Esophagus muscularis mucosa (tissue), 4 donors: ENCODE measurements at regions of chr12 and their contacts with region 1.

Region 1: GRCh38 chr12:132083941-132084620 is 60.0 kb downstream of the DDX51 start:
- DNase-seq: peak; percentile 97
- H3K4me3 ChIP-seq: peak overlapping the region; percentile 95 to 99 (median 98)
- H3K27ac ChIP-seq: peak overlapping the region; percentile 88 to 95 (median 93)
- H3K4me1 ChIP-seq: peaks cover 13 to 23% (median 22%) of the 10 kb centered on the region in 4 donors
- H3K27me3 ChIP-seq: no peaks in the 10 kb centered on the region
- CTCF ChIP-seq: no peak
- EP300 ChIP-seq: no peak
- POLR2A ChIP-seq: peak; percentile 81

Region 2: GRCh38 chr12:131896080-131896810 is 187.8 kb before region 1 on chr12:
- intact Hi-C with region 1: no loop called
- DNase-seq: peak; percentile 96
- H3K4me3 ChIP-seq: peak overlapping the region; percentile 67 to 82 (median 69)
- H3K27ac ChIP-seq: peak overlapping the region; percentile 95 to 99 (median 98)
- H3K4me1 ChIP-seq: peaks cover 39 to 67% (median 60%) of the 10 kb centered on the region in 4 donors
- H3K27me3 ChIP-seq: no peaks in the 10 kb centered on the region
- CTCF ChIP-seq: no peak
- EP300 ChIP-seq: peak; percentile 57
- POLR2A ChIP-seq: peak; percentile 92

Region 3: GRCh38 chr12:132046561-132046960 is 37.5 kb before region 1 on chr12:
- intact Hi-C with region 1: no loop called
- DNase-seq: no peak
- H3K4me3 ChIP-seq: no peak overlapping the region
- H3K27ac ChIP-seq: no peak overlapping the region
- H3K4me1 ChIP-seq: peaks cover 0 to 3% (median 0%) of the 10 kb centered on the region in 4 donors
- H3K27me3 ChIP-seq: no peaks in the 10 kb centered on the region
- CTCF ChIP-seq: no peak
- EP300 ChIP-seq: no peak
- POLR2A ChIP-seq: no peak

Region 4: DNA sequence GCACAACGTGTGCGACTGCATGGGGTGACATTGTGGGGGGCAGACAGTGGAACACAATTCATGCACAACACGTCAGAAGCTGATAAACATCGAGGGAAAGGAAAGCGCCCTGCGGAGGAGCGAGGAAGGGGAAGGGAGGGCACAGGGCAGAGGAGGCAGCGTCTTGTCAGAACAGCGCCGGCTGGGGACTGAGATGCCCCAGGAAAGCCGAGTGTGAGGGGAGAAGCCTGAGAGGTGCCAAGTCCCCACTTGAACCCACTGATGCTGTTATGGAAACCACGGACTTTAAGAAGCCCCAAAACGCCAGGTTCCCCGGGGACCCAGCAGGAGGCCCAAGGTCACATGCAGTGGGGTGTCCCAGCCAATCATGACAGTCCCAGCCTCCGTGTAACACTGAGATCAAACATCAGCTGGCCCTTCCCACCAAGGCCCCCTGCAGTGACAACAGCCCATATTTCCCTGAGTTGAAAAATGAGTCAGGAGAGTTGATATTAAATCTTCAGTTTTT is 175.3 kb after region 1 on chr12:
- intact Hi-C with region 1: no loop called
- DNase-seq: no peak
- H3K4me3 ChIP-seq: no peak overlapping the region
- H3K27ac ChIP-seq: no peak overlapping the region
- H3K4me1 ChIP-seq: no peaks in the 10 kb centered on the region
- H3K27me3 ChIP-seq: peaks cover 0 to 66% (median 0%) of the 10 kb centered on the region in 4 donors
- CTCF ChIP-seq: no peak
- EP300 ChIP-seq: no peak
- POLR2A ChIP-seq: no peak

Region 5: DNA sequence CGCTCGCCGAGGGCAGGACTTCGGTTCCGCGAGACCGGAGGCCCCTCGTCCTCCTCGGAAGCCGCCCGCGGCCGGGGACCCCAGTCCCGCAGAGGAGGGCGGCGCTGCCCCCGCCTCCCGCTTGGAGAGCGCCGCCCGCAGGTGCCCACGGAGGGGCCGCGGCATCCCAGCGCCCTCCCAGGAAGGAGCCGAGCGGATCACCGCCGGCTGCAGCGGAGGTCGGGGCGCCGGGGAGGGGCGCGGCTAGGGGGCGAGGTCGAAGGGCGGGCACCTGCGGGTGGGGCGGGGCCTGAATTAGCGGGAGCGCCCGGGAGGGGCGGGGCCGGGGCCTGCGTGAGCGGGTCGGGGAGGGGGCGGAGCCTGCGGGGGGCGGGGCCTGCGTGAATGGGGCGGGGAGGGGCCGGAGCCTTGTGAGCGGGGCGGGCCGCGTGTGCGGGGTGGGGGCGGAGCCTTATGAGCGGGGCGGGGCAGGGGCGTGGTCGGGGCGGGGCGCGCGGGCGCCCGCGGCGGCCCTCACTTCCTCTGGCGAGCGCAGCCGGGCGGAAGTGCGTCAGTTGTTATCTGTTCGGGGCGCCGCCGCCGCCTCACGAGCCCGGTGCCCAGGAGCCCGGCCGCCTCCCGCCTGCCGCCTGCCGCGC is 405.6 kb after region 1 on chr12 and contains the start of gene FBRSL1:
- intact Hi-C with region 1: loop called (anchors 10 kb)
- DNase-seq: peak; percentile 97
- H3K4me3 ChIP-seq: peak within 1 kb of the TSS; percentile 87 to 95 (median 91)
- H3K27ac ChIP-seq: peak within 1 kb of the TSS; percentile 78 to 84 (median 82)
- H3K4me1 ChIP-seq: peaks cover 39 to 59% (median 53%) of the 10 kb centered on the region in 4 donors
- H3K27me3 ChIP-seq: no peaks in the 10 kb centered on the region
- CTCF ChIP-seq: no peak
- EP300 ChIP-seq: no peak
- POLR2A ChIP-seq: no peak
- total RNA-seq, gene FBRSL1: 14.4 to 28.1 (median 18.5) TPM